ENCODE measurements at regions of chr15 and their contacts with region 1.

Region 1: GRCh38 chr15:42575188-42576039 is at the start of gene STARD9:
- DNase-seq: peak; percentile 84 to 97 (median 92)
- ATAC-seq: peak; percentile 94
- H3K4me3 ChIP-seq: peak within 1 kb of the TSS; percentile 78
- H3K4me3 Mint-ChIP-seq: peak within 1 kb of the TSS; percentile 94
- H3K27ac ChIP-seq: peak within 1 kb of the TSS; percentile 38 to 46
- H3K27ac Mint-ChIP-seq: peak within 1 kb of the TSS; percentile 76
- H3K4me1 ChIP-seq: peaks cover 16% of the 10 kb centered on the region
- H3K4me1 Mint-ChIP-seq: peaks cover 28% of the 10 kb centered on the region
- H3K27me3 ChIP-seq: no peaks in the 10 kb centered on the region
- H3K27me3 Mint-ChIP-seq: peaks cover 16% of the 10 kb centered on the region
- CTCF ChIP-seq: no peak
- total RNA-seq, gene STARD9: 2.8 to 4.6 TPM

Region 2: GRCh38 chr15:42548253-42549031 is 27.0 kb before region 1 on chr15 and contains the starts of genes HAUS2 and LRRC57:
- CTCF ChIA-PET with region 1: interaction called, 5 read pairs
- POLR2A ChIA-PET with region 1: interaction called, 29 read pairs
- intact Hi-C with region 1: loop called in 1 of 2 experiments (anchors 1 kb)
- DNase-seq: peak; percentile 72 to 93 (median 83)
- ATAC-seq: peak; percentile 78
- H3K4me3 ChIP-seq: peak within 1 kb of the TSS; percentile 96
- H3K4me3 Mint-ChIP-seq: peak within 1 kb of the TSS; percentile 91
- H3K27ac ChIP-seq: peak within 1 kb of the TSS; percentile 76 to 84
- H3K27ac Mint-ChIP-seq: peak within 1 kb of the TSS; percentile 92
- H3K4me1 ChIP-seq: peaks cover 28% of the 10 kb centered on the region
- H3K4me1 Mint-ChIP-seq: peaks cover 64% of the 10 kb centered on the region
- H3K27me3 ChIP-seq: no peaks in the 10 kb centered on the region
- H3K27me3 Mint-ChIP-seq: no peaks in the 10 kb centered on the region
- CTCF ChIP-seq: no peak
- total RNA-seq, gene HAUS2: 23.0 to 28.2 TPM
- total RNA-seq, gene LRRC57: 25.8 to 29.6 TPM

Region 3: GRCh38 chr15:42650208-42651066 is 75.0 kb after region 1 on chr15:
- CTCF ChIA-PET with region 1: interaction called, 3 read pairs
- POLR2A ChIA-PET with region 1: no interaction called
- intact Hi-C with region 1: loop called in 1 of 2 experiments (anchors 5 kb)
- DNase-seq: peak; percentile 28 to 71 (median 40)
- ATAC-seq: peak; percentile 84
- H3K4me3 ChIP-seq: no peak overlapping the region
- H3K4me3 Mint-ChIP-seq: no peak overlapping the region
- H3K27ac ChIP-seq: no peak overlapping the region
- H3K27ac Mint-ChIP-seq: no peak overlapping the region
- H3K4me1 ChIP-seq: no peaks in the 10 kb centered on the region
- H3K4me1 Mint-ChIP-seq: no peaks in the 10 kb centered on the region
- H3K27me3 ChIP-seq: no peaks in the 10 kb centered on the region
- H3K27me3 Mint-ChIP-seq: no peaks in the 10 kb centered on the region
- CTCF ChIP-seq: peak; percentile 74

Region 4: DNA sequence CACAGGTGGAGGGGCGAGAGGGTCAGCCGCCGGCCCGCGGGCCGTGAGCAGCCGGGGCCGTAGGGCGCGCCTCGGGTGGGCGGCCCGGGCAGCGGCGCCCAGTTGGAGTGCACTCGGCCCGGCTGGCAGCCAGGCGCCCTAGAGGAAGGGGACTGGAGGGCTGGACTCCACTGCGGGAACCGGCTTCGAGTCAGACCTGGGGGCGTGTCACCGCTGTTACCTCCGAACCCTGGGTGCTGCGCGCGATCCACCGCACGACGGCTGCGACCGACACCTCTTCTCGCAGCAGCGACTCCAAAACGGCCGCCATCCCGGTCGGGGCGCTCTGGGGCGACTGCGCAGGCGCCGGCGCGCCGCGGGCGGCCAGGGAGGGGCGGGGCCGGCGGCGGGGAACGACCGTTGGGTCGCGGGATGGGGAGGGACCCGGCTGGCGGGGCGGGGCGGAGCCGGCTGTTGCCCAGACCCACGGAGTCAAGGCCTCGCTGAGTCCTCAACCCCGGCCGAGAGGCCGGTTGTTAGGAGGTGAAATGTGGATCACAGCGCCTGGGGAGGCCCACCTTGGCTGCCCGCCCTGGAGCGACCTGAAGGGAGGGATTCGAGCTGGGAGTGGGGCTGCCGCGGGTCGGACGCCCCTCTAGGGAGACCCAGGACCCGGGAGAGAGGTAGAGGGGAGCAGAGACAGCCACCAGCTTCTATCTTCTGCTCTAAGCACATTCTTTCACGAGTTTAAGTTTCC is 161.5 kb after region 1 on chr15 and contains the start of gene CDAN1:
- CTCF ChIA-PET with region 1: no interaction called
- POLR2A ChIA-PET with region 1: no interaction called
- intact Hi-C with region 1: loop called in 1 of 2 experiments (anchors 5 kb)
- DNase-seq: peak; percentile 84 to 97 (median 92)
- ATAC-seq: peak; percentile 91
- H3K4me3 ChIP-seq: peak within 1 kb of the TSS; percentile 65
- H3K4me3 Mint-ChIP-seq: peak within 1 kb of the TSS; percentile 93
- H3K27ac ChIP-seq: peak within 1 kb of the TSS; percentile 64 to 69
- H3K27ac Mint-ChIP-seq: peak within 1 kb of the TSS; percentile 88
- H3K4me1 ChIP-seq: peaks cover 25% of the 10 kb centered on the region
- H3K4me1 Mint-ChIP-seq: peaks cover 18% of the 10 kb centered on the region
- H3K27me3 ChIP-seq: no peaks in the 10 kb centered on the region
- H3K27me3 Mint-ChIP-seq: no peaks in the 10 kb centered on the region
- CTCF ChIP-seq: no peak
- total RNA-seq, gene CDAN1: 23.2 to 24.7 TPM

Region 5: GRCh38 chr15:42920519-42921227 is 345.3 kb after region 1 on chr15 and contains the start of gene TTBK2:
- CTCF ChIA-PET with region 1: no interaction called
- POLR2A ChIA-PET with region 1: no interaction called
- intact Hi-C with region 1: loop called in 1 of 2 experiments (anchors 5 kb)
- DNase-seq: peak; percentile 94 to 99 (median 98)
- ATAC-seq: peak; percentile 96
- H3K4me3 ChIP-seq: peak within 1 kb of the TSS; percentile 75
- H3K4me3 Mint-ChIP-seq: peak within 1 kb of the TSS; percentile 99
- H3K27ac ChIP-seq: peak within 1 kb of the TSS; percentile 59 to 63
- H3K27ac Mint-ChIP-seq: peak within 1 kb of the TSS; percentile 89
- H3K4me1 ChIP-seq: peaks cover 15% of the 10 kb centered on the region
- H3K4me1 Mint-ChIP-seq: peaks cover 35% of the 10 kb centered on the region
- H3K27me3 ChIP-seq: no peaks in the 10 kb centered on the region
- H3K27me3 Mint-ChIP-seq: no peaks in the 10 kb centered on the region
- CTCF ChIP-seq: peak; percentile 26
- total RNA-seq, gene TTBK2: 17.5 to 20.1 TPM

Region 6: DNA sequence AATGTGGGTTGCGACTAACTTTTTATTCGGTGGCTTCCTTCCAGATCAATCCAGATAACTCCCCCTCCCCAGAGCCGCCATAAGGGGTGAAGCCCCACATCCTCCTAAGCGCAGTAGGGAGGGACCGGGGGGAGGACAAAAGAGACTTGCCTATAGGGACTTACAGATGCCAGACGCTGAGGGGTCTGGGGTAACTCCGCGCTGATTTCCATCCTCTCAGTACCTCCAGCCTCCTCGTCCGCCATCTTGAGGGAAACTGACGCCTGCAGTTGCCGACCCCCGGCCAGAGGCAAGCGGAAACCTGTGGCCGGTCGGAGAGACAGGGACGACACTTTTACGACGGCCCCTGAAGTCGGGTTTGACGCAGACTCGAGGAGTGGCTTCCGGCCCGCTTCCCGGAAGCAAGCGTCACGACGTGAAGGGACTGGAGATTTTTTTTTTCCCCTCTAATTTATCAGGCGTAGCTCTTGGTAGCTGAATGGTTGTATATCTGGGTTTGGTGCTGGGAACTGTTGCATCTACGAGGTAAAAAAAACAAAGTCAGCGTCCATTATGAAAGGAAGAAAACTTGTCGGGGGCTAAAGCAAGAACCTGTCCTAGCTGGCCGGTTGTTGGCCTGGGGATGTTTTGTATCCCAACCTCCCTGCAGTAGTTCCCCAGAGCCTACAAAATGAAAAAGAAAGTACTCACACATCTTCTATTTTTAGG is 530.5 kb after region 1 on chr15 and contains the start of gene UBR1:
- CTCF ChIA-PET with region 1: no interaction called
- POLR2A ChIA-PET with region 1: no interaction called
- intact Hi-C with region 1: loop called in 1 of 2 experiments (anchors 5 kb)
- DNase-seq: peak; percentile 73 to 96 (median 82)
- ATAC-seq: peak; percentile 81
- H3K4me3 ChIP-seq: peak within 1 kb of the TSS; percentile 89
- H3K4me3 Mint-ChIP-seq: peak within 1 kb of the TSS; percentile 93
- H3K27ac ChIP-seq: peak within 1 kb of the TSS; percentile 90 to 95
- H3K27ac Mint-ChIP-seq: peak within 1 kb of the TSS; percentile 96
- H3K4me1 ChIP-seq: peaks cover 30% of the 10 kb centered on the region
- H3K4me1 Mint-ChIP-seq: peaks cover 56% of the 10 kb centered on the region
- H3K27me3 ChIP-seq: no peaks in the 10 kb centered on the region
- H3K27me3 Mint-ChIP-seq: peaks cover 5% of the 10 kb centered on the region
- CTCF ChIP-seq: no peak
- total RNA-seq, gene UBR1: 42.6 to 45.9 TPM